Ovary (tissue), 10 donors: ENCODE measurements at regions of chr17 and their contacts with region 1.

Region 1: DNA sequence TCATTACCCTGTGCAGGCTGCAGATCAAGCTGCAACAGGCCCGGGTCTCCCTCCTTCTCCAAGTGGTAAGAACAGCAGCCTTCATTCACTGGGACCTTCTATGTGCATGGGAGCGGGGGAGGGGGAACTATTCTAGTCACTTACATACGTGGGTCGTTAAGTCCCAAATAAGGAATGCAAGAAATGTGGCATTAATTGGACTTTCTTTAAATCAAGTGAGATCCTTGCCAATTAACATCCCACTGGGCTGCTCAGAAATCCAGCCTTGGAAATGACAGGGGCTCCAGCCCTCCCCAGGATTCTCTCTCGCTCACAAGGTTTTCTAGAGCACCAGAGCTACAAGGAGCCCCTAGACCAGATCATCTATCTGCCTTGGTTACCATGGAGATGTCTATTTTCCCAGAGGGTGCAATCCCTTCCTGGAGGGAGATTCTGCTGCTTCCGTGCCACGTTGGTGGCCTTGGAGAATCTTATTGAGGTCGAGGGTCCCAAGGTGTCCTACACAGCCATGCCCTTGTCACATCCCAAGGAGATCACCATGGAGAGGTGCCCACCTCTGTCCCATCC is 5.2 kb upstream of the EIF1 start:
- DNase-seq: no peak
- H3K4me3 ChIP-seq: no peak overlapping the region
- H3K27ac ChIP-seq: no peak overlapping the region
- H3K4me1 ChIP-seq: no peaks in the 10 kb centered on the region
- H3K27me3 ChIP-seq: no peaks in the 10 kb centered on the region
- CTCF ChIP-seq: no peak
- EP300 ChIP-seq: no peak
- POLR2A ChIP-seq: no peak

Region 2: DNA sequence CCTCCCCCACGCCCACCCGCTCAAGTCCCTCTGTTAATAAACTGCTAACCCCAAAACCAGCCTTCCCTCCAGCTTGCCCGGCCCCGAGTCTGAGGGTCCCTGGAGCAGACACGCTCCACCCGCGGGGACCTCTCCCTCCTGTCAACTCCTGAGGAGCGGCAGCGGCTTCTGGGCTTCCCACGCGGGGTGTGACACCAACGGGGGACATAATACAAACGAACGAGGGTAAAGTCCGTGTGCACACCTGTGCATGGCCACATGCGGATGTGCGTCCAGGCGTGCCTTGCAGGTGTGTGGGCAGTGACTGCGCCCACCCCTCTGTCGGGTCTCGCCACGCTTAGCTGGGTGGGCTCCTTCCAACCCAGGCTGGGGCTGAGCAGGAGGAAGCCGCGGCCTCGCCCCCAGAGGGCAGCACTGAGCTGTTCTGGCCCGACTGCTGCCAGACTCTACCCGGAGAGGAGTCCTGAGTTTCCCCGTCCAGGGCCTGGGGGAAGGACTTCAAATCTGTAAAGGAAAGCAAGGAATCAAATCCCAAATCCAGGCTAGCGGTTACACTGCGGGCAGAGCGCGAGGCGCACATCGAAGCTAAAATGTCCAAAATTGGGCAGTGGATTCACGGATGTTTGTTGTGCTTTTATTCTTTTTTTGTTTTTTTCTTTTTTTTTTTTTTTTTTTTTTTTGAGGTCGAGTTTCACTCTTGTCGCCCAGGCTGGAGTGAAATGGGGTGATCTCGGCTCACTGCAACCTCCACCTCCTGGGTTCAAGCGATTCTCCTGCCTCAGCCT is 34.9 kb before region 1 on chr17:
- intact Hi-C with region 1: loop called in 1 of 4 experiments (anchors 1 kb)
- DNase-seq: peak; percentile 79 to 92 (median 90)
- H3K4me3 ChIP-seq: peak overlapping the region; percentile 33
- H3K27ac ChIP-seq: no peak overlapping the region
- H3K4me1 ChIP-seq: peaks cover 4% of the 10 kb centered on the region
- H3K27me3 ChIP-seq: no peaks in the 10 kb centered on the region
- CTCF ChIP-seq: peak; percentile 91 to 97 (median 94)
- EP300 ChIP-seq: no peak
- POLR2A ChIP-seq: no peak

Region 3: GRCh38 chr17:41705271-41705991 is 21.9 kb after region 1 on chr17:
- intact Hi-C with region 1: no loop called
- DNase-seq: peak; percentile 70 to 81 (median 71)
- H3K4me3 ChIP-seq: no peak overlapping the region
- H3K27ac ChIP-seq: peak overlapping the region; percentile 39 to 80
- H3K4me1 ChIP-seq: peaks cover 5% of the 10 kb centered on the region
- H3K27me3 ChIP-seq: no peaks in the 10 kb centered on the region
- CTCF ChIP-seq: no peak
- EP300 ChIP-seq: no peak
- POLR2A ChIP-seq: no peak